Ascending aorta (tissue), 2 donors: ENCODE measurements at regions of chr20 and their contacts with region 1.

Region 1: GRCh38 chr20:57596998-57597939 is 23.0 kb downstream of the ZBP1 start:
- DNase-seq: peak in 1 of 2 donors; percentile 82
- H3K4me3 ChIP-seq: peak overlapping the region in 1 of 2 donors; percentile 25
- H3K27ac ChIP-seq: no peak overlapping the region
- H3K4me1 ChIP-seq: peaks cover 2 to 4% of the 10 kb centered on the region in 2 donors
- H3K27me3 ChIP-seq: no peaks in the 10 kb centered on the region
- CTCF ChIP-seq: peak; percentile 90 to 99 (median 96)

Region 2: GRCh38 chr20:57383447-57384347 is 213.6 kb before region 1 on chr20:
- intact Hi-C with region 1: loop called (anchors 5 kb)
- DNase-seq: no peak
- H3K4me3 ChIP-seq: no peak overlapping the region
- H3K27ac ChIP-seq: no peak overlapping the region
- H3K4me1 ChIP-seq: no peaks in the 10 kb centered on the region
- H3K27me3 ChIP-seq: no peaks in the 10 kb centered on the region
- CTCF ChIP-seq: no peak

Region 3: DNA sequence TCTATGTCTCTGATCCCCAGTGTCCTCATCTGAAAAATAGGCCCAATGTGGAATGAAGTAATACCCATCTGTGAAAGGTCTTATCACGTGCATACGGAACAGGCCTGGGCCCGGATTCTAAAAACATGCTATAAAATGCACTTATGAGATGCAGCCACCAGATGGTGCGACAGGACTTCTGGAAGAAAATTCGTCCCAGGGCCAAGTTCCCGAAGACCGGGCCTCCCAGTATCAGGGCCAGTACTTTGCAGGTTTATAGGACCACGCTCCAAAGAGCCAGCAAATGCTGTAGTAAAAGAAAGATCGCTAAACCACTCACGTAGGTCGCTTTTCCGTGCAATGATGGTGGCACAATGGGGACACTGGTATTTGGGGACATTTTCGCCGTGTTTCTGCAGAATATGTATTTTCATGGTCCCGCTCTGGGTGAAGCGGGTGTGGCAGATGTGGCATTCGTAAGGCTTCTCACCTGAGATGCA is 83.0 kb before region 1 on chr20:
- intact Hi-C with region 1: loop called (anchors 1 kb)
- DNase-seq: peak in 1 of 2 donors; percentile 83
- H3K4me3 ChIP-seq: no peak overlapping the region
- H3K27ac ChIP-seq: no peak overlapping the region
- H3K4me1 ChIP-seq: no peaks in the 10 kb centered on the region
- H3K27me3 ChIP-seq: no peaks in the 10 kb centered on the region
- CTCF ChIP-seq: peak; percentile 63 to 84 (median 81)

Region 4: GRCh38 chr20:58087193-58087858 is 490.1 kb after region 1 on chr20:
- intact Hi-C with region 1: loop called (anchors 5 kb)
- DNase-seq: peak in 1 of 2 donors; percentile 52
- H3K4me3 ChIP-seq: no peak overlapping the region
- H3K27ac ChIP-seq: no peak overlapping the region
- H3K4me1 ChIP-seq: no peaks in the 10 kb centered on the region
- H3K27me3 ChIP-seq: no peaks in the 10 kb centered on the region
- CTCF ChIP-seq: peak; percentile 75 to 85 (median 75)

Region 5: DNA sequence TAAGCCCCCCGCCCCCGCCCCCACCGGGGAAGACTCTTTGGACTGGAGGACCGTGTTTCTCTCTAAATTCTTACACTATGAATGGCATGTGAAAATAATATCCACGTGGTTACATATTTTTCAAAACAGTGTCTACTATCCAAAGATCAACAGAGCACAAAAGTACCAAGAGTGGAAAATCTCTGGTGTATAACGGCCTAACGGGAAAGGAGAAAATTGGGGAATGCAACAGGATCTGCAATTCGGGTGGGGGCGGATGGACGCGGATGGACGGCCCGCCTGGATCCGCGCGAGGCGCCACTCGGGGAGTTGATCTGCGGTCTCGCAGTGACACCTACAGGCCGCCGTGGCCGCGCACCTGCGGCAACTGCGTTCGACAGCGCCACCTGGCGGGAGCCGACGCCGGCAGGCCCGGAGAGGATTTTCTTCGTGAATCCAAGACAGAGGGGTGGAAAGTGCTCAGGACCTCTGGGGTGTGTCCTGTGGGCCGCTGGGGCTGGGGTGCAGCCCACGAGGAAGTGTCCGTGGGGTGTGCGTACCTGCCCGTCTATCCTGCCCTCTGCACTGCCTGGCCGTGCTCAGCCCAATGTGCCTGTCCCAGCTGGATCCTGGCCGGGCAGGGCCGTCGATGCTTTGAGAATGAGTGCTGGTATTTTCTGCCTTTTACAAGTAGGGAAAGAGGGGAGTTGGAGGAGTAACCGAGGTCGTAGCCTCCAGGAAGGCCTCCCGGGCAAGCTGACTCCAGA is 612.6 kb after region 1 on chr20:
- intact Hi-C with region 1: loop called (anchors 1 kb)
- DNase-seq: peak in 1 of 2 donors; percentile 88
- H3K4me3 ChIP-seq: no peak overlapping the region
- H3K27ac ChIP-seq: no peak overlapping the region
- H3K4me1 ChIP-seq: no peaks in the 10 kb centered on the region
- H3K27me3 ChIP-seq: no peaks in the 10 kb centered on the region
- CTCF ChIP-seq: peak; percentile 100